ENCODE measurements at regions of chr10 and their contacts with region 1.

Region 1: GRCh38 chr10:31031558-31032257 is at the start of gene ZNF438:
- DNase-seq: peak; percentile 94
- H3K4me3 Mint-ChIP-seq: peak within 1 kb of the TSS; percentile 86
- H3K27ac Mint-ChIP-seq: peak within 1 kb of the TSS; percentile 98
- H3K4me1 Mint-ChIP-seq: peaks cover 27% of the 10 kb centered on the region
- H3K27me3 Mint-ChIP-seq: no peaks in the 10 kb centered on the region
- total RNA-seq, gene ZNF438: 5.8 and 6.1 TPM in 2 replicates

Region 2: DNA sequence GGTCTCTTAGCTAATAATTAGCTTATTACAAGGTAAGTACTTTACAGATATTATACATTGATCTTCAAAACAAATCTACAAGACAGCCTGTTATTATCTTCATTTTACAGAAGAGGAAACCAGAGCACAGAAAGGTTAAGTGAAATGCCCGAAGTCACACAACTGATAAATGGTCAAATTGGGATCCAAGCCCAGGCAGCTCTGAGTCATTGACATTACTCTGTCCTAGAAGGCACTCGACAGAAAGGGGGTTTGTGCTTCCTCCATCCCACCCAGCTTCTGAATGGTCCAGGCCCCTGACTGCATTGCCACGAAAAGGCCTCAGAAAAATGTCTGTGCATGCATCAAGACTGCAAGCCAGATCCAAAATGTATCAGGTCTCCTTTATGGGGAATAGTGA is 81.3 kb after region 1 on chr10:
- intact Hi-C with region 1: no loop called
- DNase-seq: no peak
- H3K4me3 Mint-ChIP-seq: no peak overlapping the region
- H3K27ac Mint-ChIP-seq: no peak overlapping the region
- H3K4me1 Mint-ChIP-seq: no peaks in the 10 kb centered on the region
- H3K27me3 Mint-ChIP-seq: no peaks in the 10 kb centered on the region

Region 3: DNA sequence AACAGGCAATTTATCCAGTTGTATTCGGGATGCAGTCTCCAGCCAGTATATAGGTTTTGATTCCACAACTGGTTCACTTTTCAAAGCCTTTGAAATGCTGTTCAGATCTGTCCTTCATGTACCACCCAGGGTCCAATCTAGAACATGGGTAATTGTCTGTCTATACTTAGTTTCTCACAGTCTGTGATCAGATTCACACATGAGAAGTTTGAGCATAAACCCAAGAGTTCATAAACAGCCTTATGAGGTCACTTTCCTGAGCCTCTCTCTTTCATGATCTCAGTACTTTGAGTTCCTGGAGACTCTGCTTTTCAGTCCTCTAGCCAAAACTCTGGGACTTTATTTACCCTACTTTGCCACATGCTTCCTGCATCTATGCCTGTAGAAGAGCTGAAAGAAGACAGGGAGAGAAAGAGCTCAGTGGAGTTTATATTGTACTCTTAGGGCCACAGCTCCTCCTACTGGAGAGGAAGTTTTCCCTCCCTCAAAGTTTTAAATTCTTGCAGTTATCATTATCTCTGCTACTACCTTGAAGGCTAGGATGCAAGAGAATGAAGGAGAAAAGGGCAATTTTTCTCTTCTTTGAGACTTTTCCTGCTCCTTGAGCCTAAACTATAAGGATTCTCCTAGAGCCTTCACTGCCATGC is 459.3 kb after region 1 on chr10:
- intact Hi-C with region 1: loop called (anchors 5 kb)
- DNase-seq: no peak
- H3K4me3 Mint-ChIP-seq: no peak overlapping the region
- H3K27ac Mint-ChIP-seq: no peak overlapping the region
- H3K4me1 Mint-ChIP-seq: peaks cover 8% of the 10 kb centered on the region
- H3K27me3 Mint-ChIP-seq: no peaks in the 10 kb centered on the region